ENCODE measurements at regions of chr18 and their contacts with region 1.

Region 1: DNA sequence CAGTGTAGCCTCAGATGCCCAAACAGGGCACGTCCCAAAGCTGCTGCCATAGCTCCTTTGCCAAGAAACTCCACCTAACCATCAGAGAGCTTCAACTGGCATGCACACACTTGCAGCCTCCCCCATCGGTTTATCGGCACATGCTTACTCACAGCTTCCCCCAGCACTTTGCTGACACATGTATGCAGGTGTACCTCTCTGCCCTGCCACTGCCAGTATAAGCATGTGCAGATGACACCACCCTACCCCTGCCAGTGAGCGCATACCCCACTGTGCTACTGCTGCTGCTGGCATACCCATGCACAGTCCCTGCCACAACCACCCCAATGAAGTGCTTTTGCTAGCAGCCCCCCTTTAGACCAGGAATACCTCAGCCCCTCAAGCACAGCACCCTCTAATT is 1231.0 kb downstream of the DSC3 start:
- DNase-seq: no peak
- H3K4me3 ChIP-seq: no peak overlapping the region
- H3K27ac ChIP-seq: no peak overlapping the region
- H3K4me1 ChIP-seq: no peaks in the 10 kb centered on the region
- H3K27me3 ChIP-seq: no peaks in the 10 kb centered on the region
- CTCF ChIP-seq: no peak
- POLR2A ChIP-seq: no peak

Region 2: DNA sequence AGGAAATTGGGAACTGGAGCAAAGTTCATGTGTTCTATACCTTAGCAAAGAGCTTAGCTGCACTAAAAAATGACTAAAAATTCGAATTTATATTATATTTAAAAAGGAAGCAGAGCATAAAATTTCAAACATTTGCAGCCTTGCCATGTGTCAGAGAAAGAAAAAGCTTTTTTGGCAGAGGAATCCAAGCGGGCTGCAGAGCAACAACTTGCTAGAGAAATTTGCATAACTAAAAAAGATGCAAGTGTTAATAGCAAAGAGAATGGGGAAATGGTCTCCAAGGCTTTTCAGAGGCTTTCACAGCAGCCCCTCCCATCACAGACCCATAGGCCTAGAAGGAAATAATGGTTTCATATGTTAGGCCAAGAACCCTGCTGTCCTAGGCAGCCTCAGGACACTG is 84.9 kb before region 1 on chr18:
- intact Hi-C with region 1: no loop called
- DNase-seq: no peak
- H3K4me3 ChIP-seq: no peak overlapping the region
- H3K27ac ChIP-seq: no peak overlapping the region
- H3K4me1 ChIP-seq: no peaks in the 10 kb centered on the region
- H3K27me3 ChIP-seq: no peaks in the 10 kb centered on the region
- CTCF ChIP-seq: no peak
- POLR2A ChIP-seq: no peak

Region 3: GRCh38 chr18:29749704-29750103 is 61.8 kb before region 1 on chr18:
- intact Hi-C with region 1: loop called in 1 of 2 experiments (anchors 10 kb)
- DNase-seq: no peak
- H3K4me3 ChIP-seq: no peak overlapping the region
- H3K27ac ChIP-seq: no peak overlapping the region
- H3K4me1 ChIP-seq: no peaks in the 10 kb centered on the region
- H3K27me3 ChIP-seq: no peaks in the 10 kb centered on the region
- CTCF ChIP-seq: no peak
- POLR2A ChIP-seq: no peak

Region 4: DNA sequence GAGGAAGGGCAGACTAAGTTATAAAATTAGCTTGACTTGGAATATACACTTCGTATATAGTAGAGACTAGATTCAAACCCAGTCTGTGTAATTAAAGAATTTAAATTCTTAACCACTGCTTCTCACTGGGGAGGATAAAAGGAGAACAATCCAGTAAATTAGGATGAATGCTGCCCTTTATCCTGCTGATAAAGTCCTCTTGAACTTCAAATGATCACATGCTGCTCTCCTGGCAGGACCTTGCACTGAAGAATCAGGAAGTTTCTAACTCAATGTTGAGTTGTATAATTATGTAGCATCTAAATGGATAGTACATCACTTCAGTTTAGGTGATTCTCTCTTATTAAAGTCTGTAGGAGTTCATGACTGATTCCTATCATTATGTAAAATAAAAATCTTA is 51.3 kb after region 1 on chr18:
- intact Hi-C with region 1: loop called in 1 of 2 experiments (anchors 10 kb)
- DNase-seq: no peak
- H3K4me3 ChIP-seq: no peak overlapping the region
- H3K27ac ChIP-seq: no peak overlapping the region
- H3K4me1 ChIP-seq: no peaks in the 10 kb centered on the region
- H3K27me3 ChIP-seq: no peaks in the 10 kb centered on the region
- CTCF ChIP-seq: no peak
- POLR2A ChIP-seq: no peak